ENCODE measurements at regions of chr9 and their contacts with region 1.

Region 1: DNA sequence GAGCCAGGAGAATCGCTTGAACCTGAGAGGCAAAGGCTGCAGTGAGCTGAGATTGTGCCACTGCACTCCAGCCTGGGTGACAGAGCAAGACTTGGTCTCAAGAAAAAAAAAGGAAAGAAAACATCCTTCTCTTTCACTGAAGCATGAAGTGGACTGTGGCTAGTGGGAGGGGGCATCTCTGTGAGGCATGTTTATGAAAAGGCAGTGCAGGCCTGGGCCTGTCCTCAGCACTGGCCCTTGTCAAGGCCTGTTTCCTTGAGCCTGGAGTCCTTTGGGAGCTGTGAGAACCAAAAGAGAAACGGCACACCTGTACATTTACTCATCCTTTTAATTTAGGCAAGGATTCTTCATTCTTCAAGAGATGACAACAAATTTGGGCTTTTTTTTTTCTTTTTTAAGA is 18.3 kb upstream of the FUBP3 start:
- DNase-seq: no peak
- ATAC-seq: no peak

Region 2: GRCh38 chr9:130408669-130409068 is 152.4 kb before region 1 on chr9:
- intact Hi-C with region 1: no loop called
- DNase-seq: no peak
- ATAC-seq: no peak

Region 3: GRCh38 chr9:130498298-130498917 is 62.6 kb before region 1 on chr9:
- intact Hi-C with region 1: no loop called
- DNase-seq: peak in 1 of 2 donors; percentile 20
- ATAC-seq: no peak

Region 4: GRCh38 chr9:130599625-130600024 is 38.6 kb after region 1 on chr9:
- intact Hi-C with region 1: loop called in 1 of 2 experiments (anchors 5 kb)
- DNase-seq: no peak
- ATAC-seq: no peak